Breast epithelium (tissue), 4 donors: ENCODE measurements at regions of chr3 and their contacts with region 1.

Region 1: DNA sequence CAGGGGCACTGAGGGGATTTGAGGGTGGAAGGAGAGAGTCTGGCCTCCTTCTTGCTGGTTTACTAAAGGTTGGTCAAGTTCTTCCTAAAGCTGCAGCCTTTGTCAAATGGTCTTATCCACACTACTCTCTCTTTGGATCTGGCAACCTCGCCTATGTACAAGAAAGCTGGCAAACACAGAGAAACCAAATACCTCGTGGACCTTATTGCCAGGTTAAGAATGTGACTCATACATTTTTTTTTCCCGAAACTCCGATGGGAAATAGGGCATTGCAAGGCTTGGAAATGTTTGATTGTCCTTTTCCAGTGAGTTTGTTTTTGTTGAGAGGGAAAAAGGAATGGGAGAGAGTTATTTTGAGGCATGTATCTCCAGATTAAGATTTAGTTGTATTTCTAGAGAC is 13.9 kb downstream of the EOMES start:
- DNase-seq: no peak
- H3K4me3 ChIP-seq: no peak overlapping the region
- H3K27ac ChIP-seq: no peak overlapping the region
- H3K4me1 ChIP-seq: no peaks in the 10 kb centered on the region
- H3K27me3 ChIP-seq: peaks cover 0 to 2% of the 10 kb centered on the region in 2 donors
- CTCF ChIP-seq: no peak
- POLR2A ChIP-seq: no peak

Region 2: DNA sequence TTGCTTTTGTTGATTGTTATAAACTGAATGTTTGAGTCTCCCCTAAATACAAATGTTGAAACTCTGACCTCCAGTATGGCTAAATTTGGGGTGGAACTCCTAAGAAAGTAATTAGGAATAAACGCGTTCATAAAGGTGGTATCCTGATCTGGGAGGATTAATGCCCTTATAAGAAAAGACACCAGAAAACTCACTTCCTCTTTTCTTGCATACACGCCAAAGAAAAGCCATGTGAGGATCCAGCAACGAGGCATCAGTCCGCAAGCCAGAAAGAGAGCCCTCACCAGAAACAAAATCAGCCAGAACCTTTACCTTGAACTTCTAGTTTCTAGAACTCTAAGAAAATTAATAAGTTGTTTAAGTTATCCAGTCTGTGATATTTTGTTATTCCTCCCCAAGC is 677.8 kb after region 1 on chr3:
- intact Hi-C with region 1: loop called (anchors 5 kb)
- DNase-seq: no peak
- H3K4me3 ChIP-seq: no peak overlapping the region
- H3K27ac ChIP-seq: no peak overlapping the region
- H3K4me1 ChIP-seq: no peaks in the 10 kb centered on the region
- H3K27me3 ChIP-seq: no peaks in the 10 kb centered on the region
- CTCF ChIP-seq: no peak
- POLR2A ChIP-seq: no peak